Activated T-helper 1 cell treated with anti-CD3 and anti-CD28 coated beads, Interleukin-12 subunit alpha, Interleukin-12 subunit beta, Interleukin-2, Interleukin-4 antibody, amounts not matched to agents 30 ng/mL and 10 ng/mL and 1 ng/mL, durations not matched to agents 14 hours and 24 hours and 36 hours (primary cell): ENCODE measurements at regions of chr3 and their contacts with region 1.

Region 1: GRCh38 chr3:51799879-51800749 is 21.1 kb upstream of the IQCF6 start:
- DNase-seq: peak; percentile 14
- H3K4me3 Mint-ChIP-seq: no peak overlapping the region
- H3K27ac Mint-ChIP-seq: peak overlapping the region; percentile 16
- H3K4me1 Mint-ChIP-seq: peaks cover 50% of the 10 kb centered on the region
- H3K27me3 Mint-ChIP-seq: peaks cover 4% of the 10 kb centered on the region

Region 2: DNA sequence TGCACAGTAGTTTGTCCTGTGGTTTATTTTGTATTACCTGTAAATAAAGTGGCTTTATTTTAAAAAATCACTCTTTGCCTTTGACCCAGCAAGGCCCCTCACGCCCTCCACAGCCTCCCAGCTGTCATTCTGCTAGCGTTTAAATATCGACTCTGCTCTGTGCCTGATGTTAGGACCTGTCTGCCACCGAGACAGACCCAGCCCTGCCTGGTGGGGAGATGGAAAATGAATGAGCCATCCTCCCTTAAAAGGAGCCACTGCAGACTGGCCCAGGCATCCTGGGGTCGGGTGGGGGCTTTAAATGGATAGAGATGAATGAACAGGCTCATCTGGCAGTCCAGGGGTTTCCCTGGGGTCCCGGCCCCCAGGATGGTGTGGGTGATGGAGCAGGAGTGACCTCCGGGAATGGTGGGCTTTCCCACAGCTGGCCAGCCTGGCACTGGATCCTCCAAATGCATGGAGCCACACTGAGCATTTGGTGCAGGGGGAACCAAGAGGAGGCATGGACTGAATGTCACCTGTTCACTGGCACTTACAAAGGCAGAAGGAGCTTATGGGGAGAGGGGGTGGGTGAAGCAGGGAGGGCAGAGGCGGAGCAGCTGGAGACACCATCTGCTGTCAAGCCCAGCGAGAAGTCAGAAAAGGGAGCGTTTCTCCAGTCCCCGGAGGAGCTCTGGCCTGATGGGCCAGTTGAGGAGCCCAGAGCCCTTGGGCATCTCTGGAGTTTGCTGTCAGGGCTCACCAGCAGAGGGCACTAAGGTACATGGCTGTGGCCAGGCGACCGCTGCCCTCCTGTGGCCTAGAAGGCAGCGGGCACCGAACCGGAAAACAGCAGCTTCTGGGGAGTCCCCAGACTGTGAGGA is 81.3 kb before region 1 on chr3:
- intact Hi-C with region 1: loop called (anchors 1 kb)
- DNase-seq: peak; percentile 69
- H3K4me3 Mint-ChIP-seq: no peak overlapping the region
- H3K27ac Mint-ChIP-seq: no peak overlapping the region
- H3K4me1 Mint-ChIP-seq: peaks cover 39% of the 10 kb centered on the region
- H3K27me3 Mint-ChIP-seq: no peaks in the 10 kb centered on the region

Region 3: GRCh38 chr3:51729042-51729633 is 71.0 kb before region 1 on chr3:
- intact Hi-C with region 1: loop called (anchors 2 kb)
- DNase-seq: no peak
- H3K4me3 Mint-ChIP-seq: no peak overlapping the region
- H3K27ac Mint-ChIP-seq: peak overlapping the region; percentile 24
- H3K4me1 Mint-ChIP-seq: peaks cover 26% of the 10 kb centered on the region
- H3K27me3 Mint-ChIP-seq: no peaks in the 10 kb centered on the region

Region 4: DNA sequence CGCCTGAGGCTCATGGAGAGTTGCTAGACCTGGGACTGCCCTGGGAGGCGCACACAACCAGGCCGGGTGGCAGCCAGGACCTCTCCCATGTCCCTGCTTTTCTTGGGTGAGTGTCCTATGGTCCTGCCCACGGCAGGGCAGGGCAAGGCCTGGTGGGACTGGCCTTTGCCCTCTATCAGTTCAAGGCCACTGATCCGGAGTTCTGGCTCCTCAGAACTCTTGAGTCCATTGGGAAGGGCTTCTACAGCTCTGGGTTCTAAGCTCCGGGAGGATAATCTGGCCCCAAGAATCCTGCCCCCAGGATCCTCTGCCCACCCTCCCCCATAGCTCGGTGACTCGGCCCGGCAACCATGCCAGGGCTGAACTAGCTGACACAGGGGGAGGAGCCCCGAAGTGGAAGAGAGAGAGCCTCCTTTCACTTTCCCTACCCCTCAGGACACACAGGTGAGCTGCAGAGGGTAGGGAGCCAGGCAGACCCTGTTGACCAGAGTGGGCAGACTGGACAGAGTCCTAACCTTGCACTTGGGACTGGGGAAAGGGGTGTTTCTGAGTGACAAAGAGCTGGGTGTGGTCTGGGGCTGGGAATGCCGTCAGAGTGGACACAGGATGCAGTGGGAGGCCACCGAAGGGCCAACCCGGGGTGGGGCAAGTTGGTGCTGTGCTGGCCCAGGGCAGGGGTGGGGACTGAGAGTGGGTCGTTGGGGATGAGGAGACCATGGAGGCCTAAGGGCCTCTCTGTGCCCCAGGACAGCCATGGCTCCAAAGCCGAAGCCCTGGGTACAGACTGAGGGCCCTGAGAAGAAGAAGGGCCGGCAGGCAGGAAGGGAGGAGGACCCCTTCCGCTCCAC is 142.7 kb after region 1 on chr3:
- intact Hi-C with region 1: no loop called
- DNase-seq: peak; percentile 58
- H3K4me3 Mint-ChIP-seq: peak overlapping the region; percentile 89
- H3K27ac Mint-ChIP-seq: peak overlapping the region; percentile 84
- H3K4me1 Mint-ChIP-seq: peaks cover 34% of the 10 kb centered on the region
- H3K27me3 Mint-ChIP-seq: no peaks in the 10 kb centered on the region

Region 5: DNA sequence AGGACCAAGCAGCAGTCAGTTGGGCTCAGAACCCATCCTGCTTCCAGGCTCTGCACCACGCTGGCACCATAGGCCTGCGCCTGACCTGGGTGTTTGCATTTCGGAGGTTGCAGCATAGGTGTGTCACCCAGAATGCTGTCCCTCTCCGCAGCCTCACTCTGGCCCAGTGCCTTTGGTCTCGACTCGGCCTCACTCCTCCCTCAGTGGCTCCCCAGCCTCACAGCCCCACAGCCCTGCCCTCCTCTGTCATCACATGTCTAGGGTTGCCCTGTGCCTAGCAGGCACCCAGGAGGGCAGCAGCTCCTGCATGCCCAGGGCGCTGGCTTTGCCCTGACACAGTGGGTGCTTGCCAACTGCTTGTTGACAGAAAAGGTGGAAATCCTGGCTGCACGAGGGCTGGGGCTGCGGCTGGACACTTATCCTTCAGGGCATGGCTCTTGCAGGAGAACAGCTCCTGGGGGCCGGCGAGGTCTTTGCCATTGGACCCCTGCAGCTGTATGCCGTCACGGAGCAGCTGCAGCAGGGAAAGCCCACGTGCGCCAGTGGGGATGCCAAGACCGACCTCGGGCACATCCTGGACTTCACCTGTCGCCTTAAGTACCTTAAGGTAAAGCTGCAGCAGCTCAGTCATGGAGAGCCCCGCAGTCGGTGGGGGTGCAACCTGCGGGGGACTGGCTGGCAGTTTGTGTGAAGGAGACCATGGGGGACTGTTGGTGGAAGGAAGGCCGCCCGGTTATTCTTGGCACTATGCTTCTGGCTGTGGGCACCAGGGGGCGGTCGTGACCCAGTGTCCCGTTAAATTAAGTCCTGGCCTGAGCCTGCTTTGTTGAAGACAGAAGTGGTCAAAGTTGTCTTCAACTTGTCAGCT is 671.5 kb after region 1 on chr3:
- intact Hi-C with region 1: no loop called
- DNase-seq: no peak
- H3K4me3 Mint-ChIP-seq: no peak overlapping the region
- H3K27ac Mint-ChIP-seq: no peak overlapping the region
- H3K4me1 Mint-ChIP-seq: no peaks in the 10 kb centered on the region
- H3K27me3 Mint-ChIP-seq: no peaks in the 10 kb centered on the region